MCF 10A (cell line): ENCODE measurements at regions of chr6 and their contacts with region 1.

Region 1: DNA sequence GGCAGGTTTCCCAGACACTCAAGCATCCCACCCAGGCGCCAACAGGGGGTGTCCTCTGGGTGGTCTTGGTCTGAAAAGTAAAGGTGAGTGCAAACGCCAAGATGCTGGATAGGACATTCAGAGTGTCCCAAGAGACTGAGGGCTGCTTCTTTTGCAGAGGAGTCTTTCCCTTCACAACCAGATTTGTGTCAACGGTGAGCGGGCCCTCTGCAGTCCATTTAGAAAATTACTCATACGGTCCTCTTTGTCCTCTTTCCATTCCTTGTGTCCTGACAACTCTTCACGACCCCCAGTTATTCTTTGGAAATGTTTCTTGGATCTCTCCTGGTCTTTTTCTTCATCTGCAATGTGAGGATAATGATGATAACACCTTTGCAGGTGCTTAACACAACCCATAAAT is 257.8 kb downstream of the CDC5L start:
- DNase-seq: no peak
- H3K4me3 Mint-ChIP-seq: no peak overlapping the region
- H3K27ac Mint-ChIP-seq: no peak overlapping the region
- H3K4me1 Mint-ChIP-seq: peaks cover 16% of the 10 kb centered on the region
- H3K27me3 Mint-ChIP-seq: no peaks in the 10 kb centered on the region
- CTCF ChIP-seq: no peak

Region 2: GRCh38 chr6:44190715-44191114 is 454.6 kb before region 1 on chr6:
- CTCF ChIA-PET with region 1: no interaction called
- POLR2A ChIA-PET with region 1: no interaction called
- intact Hi-C with region 1: no loop called
- DNase-seq: no peak
- H3K4me3 Mint-ChIP-seq: no peak overlapping the region
- H3K27ac Mint-ChIP-seq: no peak overlapping the region
- H3K4me1 Mint-ChIP-seq: no peaks in the 10 kb centered on the region
- H3K27me3 Mint-ChIP-seq: peaks cover 8% of the 10 kb centered on the region
- CTCF ChIP-seq: no peak

Region 3: DNA sequence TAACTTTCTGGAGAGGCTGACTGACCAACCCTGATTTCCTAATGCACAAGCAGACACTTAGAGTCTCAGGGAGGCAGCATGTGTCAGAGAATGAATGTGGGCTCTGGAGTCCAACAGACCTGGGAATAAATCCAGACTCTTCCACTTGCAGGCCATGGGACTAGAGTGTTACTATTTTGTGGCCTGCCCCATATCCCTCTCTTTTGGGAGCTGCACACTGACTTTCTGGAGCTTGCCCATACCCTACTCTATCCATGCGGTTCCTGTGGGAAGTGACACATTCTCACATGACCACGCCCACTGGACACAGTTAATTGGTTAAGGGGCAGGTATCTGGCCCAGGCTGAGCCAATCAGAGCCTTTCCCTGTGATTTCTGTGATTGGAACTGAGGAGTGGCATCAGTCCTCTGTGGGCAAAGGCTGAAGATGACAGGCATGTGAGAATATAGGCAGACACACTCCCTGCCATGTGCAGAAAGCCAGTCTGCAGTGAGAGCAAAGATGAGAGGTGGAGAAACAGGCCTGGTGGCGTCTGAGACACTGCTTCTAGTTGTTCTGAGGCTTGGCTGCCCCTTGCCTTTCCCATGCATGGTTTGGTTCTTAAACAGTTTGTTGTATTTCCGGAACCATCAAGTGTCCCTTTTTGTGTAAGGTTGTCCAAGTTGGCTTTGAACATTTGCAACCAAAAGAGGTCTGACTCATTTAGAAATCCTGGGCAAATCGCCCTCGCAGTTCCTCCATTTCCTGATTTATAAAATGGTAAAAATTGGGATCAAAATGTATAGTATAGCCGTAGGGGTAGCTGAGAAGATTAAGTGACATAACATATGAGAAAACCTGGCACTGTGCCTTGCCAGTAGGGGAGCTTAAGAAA is 132.2 kb before region 1 on chr6:
- CTCF ChIA-PET with region 1: no interaction called
- POLR2A ChIA-PET with region 1: no interaction called
- intact Hi-C with region 1: no loop called
- DNase-seq: no peak
- H3K4me3 Mint-ChIP-seq: no peak overlapping the region
- H3K27ac Mint-ChIP-seq: no peak overlapping the region
- H3K4me1 Mint-ChIP-seq: no peaks in the 10 kb centered on the region
- H3K27me3 Mint-ChIP-seq: no peaks in the 10 kb centered on the region
- CTCF ChIP-seq: no peak

Region 4: GRCh38 chr6:44655412-44656342 is 10.4 kb after region 1 on chr6:
- CTCF ChIA-PET with region 1: interaction called, 18 read pairs
- POLR2A ChIA-PET with region 1: no interaction called
- intact Hi-C with region 1: no loop called
- DNase-seq: peak; percentile 66
- H3K4me3 Mint-ChIP-seq: peak overlapping the region; percentile 3
- H3K27ac Mint-ChIP-seq: peak overlapping the region; percentile 76
- H3K4me1 Mint-ChIP-seq: peaks cover 13% of the 10 kb centered on the region
- H3K27me3 Mint-ChIP-seq: no peaks in the 10 kb centered on the region
- CTCF ChIP-seq: peak; percentile 97

Region 5: DNA sequence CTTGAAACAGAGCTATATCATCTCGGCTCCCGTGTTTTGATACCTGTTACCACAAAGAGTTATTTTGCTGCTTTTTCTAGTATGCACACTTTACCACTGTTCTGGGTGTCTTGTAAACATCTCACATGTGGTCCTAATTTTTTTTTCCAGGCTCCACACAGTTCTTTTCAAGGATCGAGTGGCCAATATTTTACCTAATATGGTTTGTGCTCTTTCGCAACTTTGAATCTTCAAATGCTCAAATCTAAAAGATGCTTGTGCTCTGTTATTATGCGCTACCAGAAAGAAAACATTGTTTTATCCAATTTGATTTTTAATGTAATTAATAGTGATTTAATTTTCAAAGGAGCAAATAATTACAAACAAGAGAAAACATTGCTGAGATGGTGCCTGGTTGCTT is 1514.8 kb after region 1 on chr6:
- CTCF ChIA-PET with region 1: no interaction called
- POLR2A ChIA-PET with region 1: no interaction called
- intact Hi-C with region 1: no loop called
- DNase-seq: no peak
- H3K4me3 Mint-ChIP-seq: no peak overlapping the region
- H3K27ac Mint-ChIP-seq: no peak overlapping the region
- H3K4me1 Mint-ChIP-seq: no peaks in the 10 kb centered on the region
- H3K27me3 Mint-ChIP-seq: peaks cover 36% of the 10 kb centered on the region
- CTCF ChIP-seq: no peak